Astrocyte of the cerebellum (primary cell): ENCODE measurements at regions of chr10 and their contacts with region 1.

Region 1: DNA sequence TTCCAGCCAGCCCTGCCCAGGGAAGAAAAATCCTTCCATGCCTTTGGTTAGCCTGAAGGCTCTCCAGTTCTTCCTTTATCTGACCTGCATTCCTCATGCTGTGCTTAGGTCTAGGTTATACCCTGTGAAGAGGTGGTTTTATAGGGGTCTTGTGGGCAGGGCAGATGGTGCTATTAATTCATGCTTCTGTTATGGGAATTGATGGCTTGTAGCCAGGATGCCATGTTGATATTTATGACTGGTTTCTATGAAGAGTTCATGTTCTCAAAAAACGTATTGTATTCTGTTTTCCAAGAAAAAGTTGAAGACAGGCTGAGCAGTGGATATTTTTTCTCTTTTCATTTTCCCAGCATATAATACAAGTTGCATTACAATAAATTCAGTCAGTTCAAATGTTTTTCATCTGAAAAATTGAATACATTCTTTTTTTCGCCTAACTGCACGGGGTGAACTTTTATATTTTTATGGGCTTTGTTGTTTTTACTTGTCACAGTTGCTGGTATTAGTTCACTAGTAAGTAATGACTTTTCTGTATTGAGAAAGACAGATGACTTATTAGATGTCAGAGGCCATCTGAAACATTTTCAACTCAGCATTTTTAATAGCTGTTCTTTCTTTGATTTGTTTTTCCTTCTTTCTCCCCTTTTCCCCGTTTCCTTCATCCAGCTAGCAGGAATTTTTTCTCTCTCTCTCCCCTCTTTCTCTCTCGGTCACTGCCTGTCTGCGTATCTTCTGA is 322.8 kb downstream of the LRMDA start:
- DNase-seq: no peak
- H3K4me3 ChIP-seq: no peak overlapping the region
- CTCF ChIP-seq: no peak

Region 2: GRCh38 chr10:75651417-75651816 is 102.8 kb before region 1 on chr10:
- in situ Hi-C with region 1: loop called (anchors 5 kb)
- DNase-seq: no peak
- H3K4me3 ChIP-seq: no peak overlapping the region
- CTCF ChIP-seq: no peak

Region 3: DNA sequence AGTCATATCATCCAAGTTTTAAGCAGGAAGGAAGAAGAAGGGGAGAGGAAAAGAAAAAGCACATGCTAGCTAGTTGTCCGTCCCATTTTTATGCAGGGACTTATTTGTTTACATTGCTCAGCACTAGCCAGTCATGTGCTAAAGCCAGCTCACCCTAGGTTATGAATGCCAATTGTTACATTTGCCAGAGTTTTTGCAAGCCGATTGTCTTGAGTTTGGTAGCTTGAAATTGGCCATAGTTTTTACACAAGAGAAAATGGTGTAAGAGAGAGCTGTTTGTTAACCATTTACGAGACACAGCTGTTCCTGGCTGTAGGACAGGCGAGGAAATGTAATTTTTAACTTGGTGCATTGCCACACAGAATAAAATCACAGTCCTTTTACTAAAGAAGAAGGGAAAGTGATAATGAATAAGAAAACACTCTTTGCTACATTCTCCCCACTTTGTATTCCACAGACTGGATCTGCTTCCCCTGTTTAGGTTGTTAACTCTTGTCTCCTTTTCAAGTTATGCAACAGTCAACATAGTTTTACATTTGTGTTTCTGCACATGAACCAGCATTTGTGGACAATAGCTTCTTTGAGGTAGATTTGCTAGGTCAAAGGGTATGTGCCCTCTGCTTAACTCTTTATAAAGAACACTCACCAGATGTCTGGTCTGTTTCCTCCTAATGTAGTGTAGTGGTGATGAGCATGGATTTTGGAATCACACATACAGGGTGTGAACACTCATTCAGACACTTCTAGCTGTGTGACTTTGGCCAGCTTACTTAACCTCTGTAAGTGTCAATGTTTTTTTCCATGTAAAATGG is 34.3 kb after region 1 on chr10:
- in situ Hi-C with region 1: no loop called
- DNase-seq: peak; percentile 27
- H3K4me3 ChIP-seq: no peak overlapping the region
- CTCF ChIP-seq: no peak

Region 4: DNA sequence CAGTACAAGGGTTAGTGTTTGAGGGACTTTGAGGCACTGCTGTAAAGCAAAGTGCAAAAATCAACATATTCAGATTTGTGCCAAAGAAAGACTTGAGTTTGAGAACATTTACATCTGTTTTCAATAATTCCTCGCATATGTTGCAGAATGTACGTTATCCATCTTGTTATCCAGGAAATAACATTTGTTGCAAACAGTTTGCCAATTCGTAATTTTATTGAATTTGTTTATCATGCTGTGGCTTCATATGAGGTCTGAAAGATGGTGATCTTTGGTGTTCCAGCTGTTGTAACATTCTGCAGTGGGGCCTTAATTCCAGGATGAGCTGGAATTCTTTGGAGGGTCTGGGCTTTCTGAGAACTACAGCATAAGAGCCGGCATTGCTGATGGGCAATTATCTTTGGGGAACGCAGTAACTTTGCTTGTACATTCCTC is 73.3 kb after region 1 on chr10:
- in situ Hi-C with region 1: no loop called
- DNase-seq: no peak
- H3K4me3 ChIP-seq: no peak overlapping the region
- CTCF ChIP-seq: no peak